Panc1 (cell line): ENCODE measurements at regions of chr3 and their contacts with region 1.

Region 1: GRCh38 chr3:14826069-14826468 is 7.3 kb downstream of the FGD5 start:
- DNase-seq: no peak
- ATAC-seq: no peak
- H3K4me3 ChIP-seq: no peak overlapping the region
- H3K27ac ChIP-seq: no peak overlapping the region
- H3K4me1 ChIP-seq: no peaks in the 10 kb centered on the region
- H3K27me3 ChIP-seq: peaks cover 17% of the 10 kb centered on the region
- CTCF ChIP-seq: no peak

Region 2: GRCh38 chr3:14847613-14848541 is 21.8 kb after region 1 on chr3:
- CTCF ChIA-PET with region 1: no interaction called
- POLR2A ChIA-PET with region 1: no interaction called
- in situ Hi-C with region 1: no loop called
- intact Hi-C with region 1: no loop called
- DNase-seq: no peak
- ATAC-seq: no peak
- H3K4me3 ChIP-seq: no peak overlapping the region
- H3K27ac ChIP-seq: no peak overlapping the region
- H3K4me1 ChIP-seq: no peaks in the 10 kb centered on the region
- H3K27me3 ChIP-seq: peaks cover 2% of the 10 kb centered on the region; the same call in 1 of the 2 replicates
- CTCF ChIP-seq: no peak

Region 3: DNA sequence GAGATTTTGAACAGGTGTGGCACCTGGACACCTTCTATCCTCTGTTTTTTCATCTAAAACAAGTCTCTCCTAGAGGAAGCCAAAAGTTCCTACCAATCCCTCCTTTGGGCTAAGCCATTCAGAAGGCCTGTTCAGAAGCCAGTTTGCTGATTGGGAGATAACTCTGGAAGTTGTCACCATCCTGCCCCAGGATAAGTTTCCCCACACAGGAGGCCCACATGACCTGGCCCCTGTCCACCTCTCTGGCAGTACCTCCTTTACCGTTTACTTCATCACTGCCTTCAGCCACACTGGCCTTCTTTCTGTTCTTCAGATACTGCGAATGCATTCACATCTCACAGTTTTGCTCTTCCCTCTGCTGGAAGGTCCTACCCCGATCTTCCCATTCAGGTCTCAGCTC is 58.1 kb after region 1 on chr3:
- CTCF ChIA-PET with region 1: no interaction called
- POLR2A ChIA-PET with region 1: interaction called, 13 read pairs
- in situ Hi-C with region 1: no loop called
- intact Hi-C with region 1: no loop called
- DNase-seq: no peak
- ATAC-seq: no peak
- H3K4me3 ChIP-seq: no peak overlapping the region
- H3K27ac ChIP-seq: no peak overlapping the region
- H3K4me1 ChIP-seq: no peaks in the 10 kb centered on the region
- H3K27me3 ChIP-seq: no peaks in the 10 kb centered on the region
- CTCF ChIP-seq: no peak